GM10248 (cell line): ENCODE measurements at regions of chr9 and their contacts with region 1.

Region 1: GRCh38 chr9:84718476-84718875 is 48.9 kb downstream of the NTRK2 start:
- DNase-seq: no peak
- CTCF ChIP-seq: no peak

Region 2: DNA sequence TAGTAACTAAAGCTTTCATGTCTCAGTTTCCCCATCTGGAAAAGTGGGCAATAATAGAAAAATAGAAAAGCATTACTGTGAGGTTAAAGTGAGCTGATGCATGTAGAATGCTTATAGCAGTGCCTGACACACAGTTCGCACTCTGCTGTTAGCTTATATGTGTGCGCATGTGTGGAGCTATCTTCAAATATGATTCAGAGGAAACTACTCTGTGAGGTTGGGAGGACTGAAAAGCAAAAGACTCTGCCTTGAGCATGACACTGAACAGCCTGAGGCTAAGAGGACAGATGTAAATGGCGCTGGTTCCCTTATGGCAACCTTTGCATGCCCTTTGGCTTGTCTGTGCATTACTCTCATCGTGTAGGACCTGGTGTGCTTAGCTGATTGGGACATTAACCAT is 29.5 kb before region 1 on chr9:
- CTCF ChIA-PET with region 1: no interaction called
- POLR2A ChIA-PET with region 1: no interaction called
- DNase-seq: no peak
- CTCF ChIP-seq: no peak

Region 3: GRCh38 chr9:84731696-84732095 is 13.2 kb after region 1 on chr9:
- CTCF ChIA-PET with region 1: interaction called, 10 read pairs
- POLR2A ChIA-PET with region 1: no interaction called
- DNase-seq: no peak
- CTCF ChIP-seq: no peak